ENCODE measurements at regions of chr1 and their contacts with region 1.

Region 1: DNA sequence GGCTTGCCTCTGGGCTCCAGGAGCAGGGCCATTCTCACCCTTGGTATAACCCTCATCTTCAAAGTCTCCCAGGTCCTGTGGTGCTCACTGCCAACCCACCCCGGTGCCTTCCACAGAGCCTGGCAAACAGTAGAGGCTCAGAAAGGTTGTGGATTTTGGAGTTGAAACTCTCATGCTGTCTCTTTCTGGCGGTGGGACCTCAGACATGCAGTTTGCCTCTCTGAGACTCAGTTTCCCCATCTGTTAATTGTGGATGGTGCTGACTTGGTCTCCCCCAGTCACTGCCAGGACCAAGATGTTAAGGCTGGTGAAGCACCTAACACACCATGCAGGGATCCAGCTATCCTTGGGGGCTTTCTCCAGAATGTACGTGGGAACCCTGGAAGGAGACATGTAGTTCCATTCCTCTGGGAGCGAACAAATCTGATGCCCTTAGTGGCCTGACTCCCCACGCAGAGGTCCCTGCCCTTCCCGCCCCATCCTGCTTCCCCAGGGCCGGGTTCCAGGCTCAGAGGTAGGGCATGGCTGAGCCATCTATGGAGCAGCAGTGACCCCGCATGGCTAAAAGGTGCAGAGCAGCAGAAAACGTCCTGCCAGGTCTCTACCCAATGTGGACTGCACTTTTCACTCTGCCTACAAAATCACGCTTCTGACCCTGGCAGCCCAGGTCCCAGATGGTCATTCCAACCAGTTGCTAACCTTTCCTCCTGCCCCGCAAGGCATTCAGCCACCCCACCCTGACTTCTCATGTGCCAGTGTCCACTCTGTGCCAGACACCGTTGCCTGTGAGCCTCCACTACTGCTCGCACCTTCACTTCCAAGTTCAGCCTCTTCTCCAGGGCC is 9.2 kb upstream of the TTC22 start:
- DNase-seq: peak; percentile 80
- ATAC-seq: peak; percentile 84
- H3K4me3 ChIP-seq: no peak overlapping the region
- H3K27ac ChIP-seq: no peak overlapping the region
- H3K4me1 ChIP-seq: peaks cover 18% of the 10 kb centered on the region
- H3K27me3 ChIP-seq: no peaks in the 10 kb centered on the region
- CTCF ChIP-seq: peak; percentile 93

Region 2: DNA sequence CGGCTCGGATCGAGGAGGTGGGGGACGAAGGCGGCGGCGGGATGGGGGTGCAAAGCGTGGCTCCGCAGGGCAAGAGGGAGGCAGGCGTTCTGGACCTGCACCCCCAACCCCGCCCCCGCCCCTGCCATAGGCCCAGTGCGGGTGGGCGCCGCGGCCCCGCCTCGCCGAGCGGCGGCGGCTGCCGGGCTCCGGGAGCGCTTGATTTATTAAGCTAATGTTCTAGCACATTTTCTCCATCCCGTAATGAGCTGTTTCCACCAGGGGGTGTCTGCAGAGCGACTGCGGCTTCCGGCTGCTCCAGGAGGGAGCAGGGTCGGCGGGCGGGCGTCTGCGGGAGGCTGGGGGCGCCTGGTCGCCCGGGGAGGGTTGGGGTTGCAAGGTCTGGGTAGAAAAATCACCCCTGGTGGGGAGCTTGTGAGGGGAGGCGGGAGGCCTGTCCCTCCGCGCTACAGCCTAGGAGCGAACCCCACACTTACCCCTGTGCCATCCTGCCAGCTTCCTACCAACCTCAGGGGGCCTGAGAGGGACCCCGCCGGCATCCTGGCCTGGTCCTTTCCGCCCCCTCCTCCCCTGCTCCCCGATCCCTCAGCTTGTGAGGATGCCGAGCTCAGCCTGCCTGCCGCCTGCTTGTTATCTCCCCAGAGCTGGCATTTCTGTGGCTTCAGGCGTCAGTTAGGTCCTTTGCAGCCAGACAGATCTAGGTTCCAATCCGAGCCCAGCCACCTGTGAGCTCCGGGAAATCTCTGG is 310.8 kb before region 1 on chr1:
- CTCF ChIA-PET with region 1: no interaction called
- POLR2A ChIA-PET with region 1: no interaction called
- intact Hi-C with region 1: loop called (anchors 2 kb)
- DNase-seq: peak; percentile 54
- ATAC-seq: peak; percentile 76
- H3K4me3 ChIP-seq: peak overlapping the region; percentile 64
- H3K27ac ChIP-seq: no peak overlapping the region
- H3K4me1 ChIP-seq: peaks cover 6% of the 10 kb centered on the region; the same call in 1 of the 2 replicates
- H3K27me3 ChIP-seq: 0 out of 2 replicates have a peak, but pooled peaks cover 25% of the 10 kb centered on the region
- CTCF ChIP-seq: peak; percentile 50

Region 3: GRCh38 chr1:54671985-54672608 is 138.2 kb before region 1 on chr1:
- CTCF ChIA-PET with region 1: no interaction called
- POLR2A ChIA-PET with region 1: no interaction called
- intact Hi-C with region 1: loop called (anchors 1 kb)
- DNase-seq: peak; percentile 76
- ATAC-seq: peak; percentile 85
- H3K4me3 ChIP-seq: no peak overlapping the region
- H3K27ac ChIP-seq: no peak overlapping the region
- H3K4me1 ChIP-seq: no peaks in the 10 kb centered on the region
- H3K27me3 ChIP-seq: 0 out of 2 replicates have a peak, but pooled peaks cover under 1% of the 10 kb centered on the region
- CTCF ChIP-seq: peak; percentile 89

Region 4: DNA sequence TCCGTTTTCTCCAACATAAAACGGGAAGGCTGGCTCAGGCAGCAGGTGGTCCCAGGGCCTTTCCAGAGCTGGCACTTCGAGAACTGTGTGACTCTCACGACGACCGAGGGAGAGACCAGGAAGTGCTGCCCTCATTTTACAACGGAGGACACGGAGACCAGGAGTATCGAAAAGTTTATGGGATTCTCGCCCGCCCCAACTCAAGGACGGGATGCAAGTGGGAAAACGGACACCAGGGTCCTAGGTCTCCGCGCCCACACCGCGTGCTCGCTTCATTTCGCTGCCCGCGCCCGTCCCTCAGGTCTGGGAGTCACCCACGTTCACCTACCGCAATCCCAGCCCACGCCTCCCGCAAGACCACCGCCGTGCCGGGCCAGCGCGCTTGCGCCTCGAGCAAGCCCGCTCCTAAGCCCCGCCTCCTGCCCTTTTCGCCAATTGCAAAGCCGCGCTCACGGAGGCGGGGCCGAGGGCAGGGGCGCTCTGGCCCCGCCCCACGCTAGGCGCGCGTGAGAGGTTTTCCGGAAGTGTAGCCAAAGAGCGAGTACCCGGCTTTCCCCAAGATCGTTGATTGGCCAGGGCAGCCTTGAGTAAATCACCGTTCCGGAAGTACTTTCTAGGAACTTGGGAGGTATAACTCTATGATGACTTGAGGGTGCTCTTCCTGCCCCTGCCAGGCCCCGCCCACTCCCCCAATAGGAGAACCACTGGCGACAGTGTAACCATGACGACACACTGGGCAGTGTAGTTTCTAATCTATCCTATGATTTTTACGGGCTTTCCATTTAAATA is 46.0 kb before region 1 on chr1 and contains the start of gene PARS2:
- CTCF ChIA-PET with region 1: no interaction called
- POLR2A ChIA-PET with region 1: no interaction called
- intact Hi-C with region 1: loop called (anchors 1 kb)
- DNase-seq: peak; percentile 99
- ATAC-seq: peak; percentile 92
- H3K4me3 ChIP-seq: peak within 1 kb of the TSS; percentile 84
- H3K27ac ChIP-seq: no peak within 1 kb of the TSS
- H3K4me1 ChIP-seq: peaks cover 12% of the 10 kb centered on the region; the same call in 1 of the 2 replicates
- H3K27me3 ChIP-seq: no peaks in the 10 kb centered on the region
- CTCF ChIP-seq: no peak
- total RNA-seq, gene PARS2: 3.5 and 5.0 TPM in 2 replicates

Region 5: DNA sequence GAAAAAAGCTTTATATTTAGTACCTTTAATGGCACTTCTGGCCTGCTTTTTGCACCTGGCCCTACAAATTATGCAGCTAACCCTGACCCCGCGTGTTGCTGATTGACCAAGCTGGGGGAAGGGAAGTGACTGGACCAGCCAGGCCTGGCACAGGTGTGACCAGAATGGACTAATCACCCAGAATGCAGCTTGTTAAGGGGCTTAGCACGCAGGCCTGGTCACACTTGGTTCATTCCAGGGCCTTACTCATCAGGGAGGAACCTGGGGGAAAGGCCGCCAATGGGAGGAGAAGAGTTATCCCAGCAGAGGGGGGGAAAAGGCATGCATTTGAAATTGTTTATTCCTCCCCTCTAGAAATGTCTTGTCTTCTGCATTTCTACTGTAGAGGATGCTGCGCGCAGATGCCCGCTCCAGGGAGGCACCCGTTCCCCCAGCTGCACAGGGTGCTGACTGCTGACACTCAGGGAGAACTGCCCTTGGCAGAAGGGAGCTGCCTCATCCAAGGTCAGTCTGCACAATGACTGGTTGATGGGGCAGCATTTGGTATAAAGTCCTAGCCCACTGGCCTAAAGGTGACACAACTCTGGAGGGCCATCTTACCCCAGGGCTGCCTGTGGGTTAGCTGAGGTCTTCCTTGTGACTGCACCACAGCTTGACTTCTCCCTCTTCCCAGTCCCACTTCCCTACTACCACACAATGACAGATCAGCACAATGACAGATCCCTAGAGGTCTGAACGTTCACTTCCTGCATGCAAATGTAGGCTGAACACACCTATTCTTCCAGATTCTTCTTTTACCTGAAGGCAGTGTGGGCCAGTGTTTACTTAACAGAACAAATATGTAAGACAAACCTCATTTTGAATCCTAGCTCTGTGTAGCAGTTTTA is 47.7 kb after region 1 on chr1:
- CTCF ChIA-PET with region 1: no interaction called
- POLR2A ChIA-PET with region 1: no interaction called
- intact Hi-C with region 1: loop called (anchors 5 kb)
- DNase-seq: peak; percentile 89
- ATAC-seq: peak; percentile 73
- H3K4me3 ChIP-seq: no peak overlapping the region
- H3K27ac ChIP-seq: peak overlapping the region; percentile 89
- H3K4me1 ChIP-seq: peaks cover 49% of the 10 kb centered on the region
- H3K27me3 ChIP-seq: no peaks in the 10 kb centered on the region
- CTCF ChIP-seq: no peak